CD4-positive, alpha-beta memory T cell (primary cell): ENCODE measurements at regions of chr19 and their contacts with region 1.

Region 1: GRCh38 chr19:16382775-16383543 is 58.3 kb downstream of the KLF2 start:
- DNase-seq: peak; percentile 72 to 80 (median 77)
- H3K4me3 ChIP-seq: peak overlapping the region in 1 of 2 donors; percentile 50
- H3K4me3 Mint-ChIP-seq: peak overlapping the region; percentile 63 to 85 (median 77)
- H3K27ac ChIP-seq: peak overlapping the region; percentile 66
- H3K27ac Mint-ChIP-seq: peak overlapping the region; percentile 93 to 97 (median 96)
- H3K4me1 ChIP-seq: peaks cover 69% of the 10 kb centered on the region
- H3K4me1 Mint-ChIP-seq: peaks cover 35 to 76% (median 60%) of the 10 kb centered on the region in 4 donors
- H3K27me3 ChIP-seq: no peaks in the 10 kb centered on the region
- H3K27me3 Mint-ChIP-seq: no peaks in the 10 kb centered on the region

Region 2: GRCh38 chr19:16247353-16248182 is 135.4 kb before region 1 on chr19:
- CTCF ChIA-PET with region 1: interaction called, 257 read pairs
- POLR2A ChIA-PET with region 1: interaction called, 62 read pairs
- intact Hi-C with region 1: loop called (anchors 1 kb)
- DNase-seq: peak; percentile 71 to 80 (median 73)
- H3K4me3 ChIP-seq: no peak overlapping the region
- H3K4me3 Mint-ChIP-seq: peak overlapping the region in 6 of 8 donors; percentile 23 to 66 (median 54)
- H3K27ac ChIP-seq: no peak overlapping the region
- H3K27ac Mint-ChIP-seq: peak overlapping the region; percentile 61 to 84 (median 67)
- H3K4me1 ChIP-seq: peaks cover 17% of the 10 kb centered on the region
- H3K4me1 Mint-ChIP-seq: peaks cover 11 to 26% (median 21%) of the 10 kb centered on the region in 4 donors
- H3K27me3 ChIP-seq: no peaks in the 10 kb centered on the region
- H3K27me3 Mint-ChIP-seq: peaks cover 0 to 3% of the 10 kb centered on the region in 2 donors

Region 3: GRCh38 chr19:16266586-16266942 is 116.4 kb before region 1 on chr19:
- CTCF ChIA-PET with region 1: interaction called, 36 read pairs
- POLR2A ChIA-PET with region 1: interaction called, 10 read pairs
- intact Hi-C with region 1: no loop called
- DNase-seq: peak; percentile 59 to 81 (median 70)
- H3K4me3 ChIP-seq: peak overlapping the region in 1 of 2 donors; percentile 14
- H3K4me3 Mint-ChIP-seq: peak overlapping the region in 7 of 8 donors; percentile 21 to 79 (median 67)
- H3K27ac ChIP-seq: peak overlapping the region; percentile 33
- H3K27ac Mint-ChIP-seq: peak overlapping the region; percentile 84 to 93 (median 89)
- H3K4me1 ChIP-seq: peaks cover 58% of the 10 kb centered on the region
- H3K4me1 Mint-ChIP-seq: peaks cover 39 to 68% (median 53%) of the 10 kb centered on the region in 4 donors
- H3K27me3 ChIP-seq: no peaks in the 10 kb centered on the region
- H3K27me3 Mint-ChIP-seq: no peaks in the 10 kb centered on the region

Region 4: GRCh38 chr19:16330368-16330801 is 52.6 kb before region 1 on chr19:
- CTCF ChIA-PET with region 1: interaction called, 133 read pairs
- POLR2A ChIA-PET with region 1: interaction called, 6,478 read pairs
- intact Hi-C with region 1: loop called (anchors 1 kb)
- DNase-seq: peak; percentile 93 to 99 (median 96)
- H3K4me3 ChIP-seq: peak overlapping the region in 1 of 2 donors; percentile 11
- H3K4me3 Mint-ChIP-seq: peak overlapping the region; percentile 97 to 100 (median 99)
- H3K27ac ChIP-seq: peak overlapping the region; percentile 83
- H3K27ac Mint-ChIP-seq: peak overlapping the region; percentile 92 to 99 (median 98)
- H3K4me1 ChIP-seq: peaks cover 38% of the 10 kb centered on the region
- H3K4me1 Mint-ChIP-seq: peaks cover 25 to 77% (median 37%) of the 10 kb centered on the region in 4 donors
- H3K27me3 ChIP-seq: no peaks in the 10 kb centered on the region
- H3K27me3 Mint-ChIP-seq: peaks cover 0 to 7% of the 10 kb centered on the region in 2 donors

Region 5: GRCh38 chr19:16371540-16371986 is 11.4 kb before region 1 on chr19:
- CTCF ChIA-PET with region 1: interaction called, 85 read pairs
- POLR2A ChIA-PET with region 1: interaction called, 1,006 read pairs
- intact Hi-C with region 1: loop called (anchors 1 kb)
- DNase-seq: peak; percentile 95 to 97 (median 95)
- H3K4me3 ChIP-seq: peak overlapping the region in 1 of 2 donors; percentile 47
- H3K4me3 Mint-ChIP-seq: no peak overlapping the region
- H3K27ac ChIP-seq: peak overlapping the region; percentile 89
- H3K27ac Mint-ChIP-seq: no peak overlapping the region
- H3K4me1 ChIP-seq: peaks cover 98% of the 10 kb centered on the region
- H3K4me1 Mint-ChIP-seq: peaks cover 0 to 60% (median 31%) of the 10 kb centered on the region in 4 donors
- H3K27me3 ChIP-seq: no peaks in the 10 kb centered on the region
- H3K27me3 Mint-ChIP-seq: no peaks in the 10 kb centered on the region

Region 6: GRCh38 chr19:16425019-16425418 is 42.1 kb after region 1 on chr19:
- CTCF ChIA-PET with region 1: no interaction called
- POLR2A ChIA-PET with region 1: no interaction called
- intact Hi-C with region 1: no loop called
- DNase-seq: no peak
- H3K4me3 ChIP-seq: no peak overlapping the region
- H3K4me3 Mint-ChIP-seq: no peak overlapping the region
- H3K27ac ChIP-seq: no peak overlapping the region
- H3K27ac Mint-ChIP-seq: peak overlapping the region in 2 of 7 donors; percentile 18 to 40
- H3K4me1 ChIP-seq: peaks cover 10% of the 10 kb centered on the region
- H3K4me1 Mint-ChIP-seq: peaks cover 2 to 43% (median 10%) of the 10 kb centered on the region in 4 donors
- H3K27me3 ChIP-seq: no peaks in the 10 kb centered on the region
- H3K27me3 Mint-ChIP-seq: no peaks in the 10 kb centered on the region

Region 7: DNA sequence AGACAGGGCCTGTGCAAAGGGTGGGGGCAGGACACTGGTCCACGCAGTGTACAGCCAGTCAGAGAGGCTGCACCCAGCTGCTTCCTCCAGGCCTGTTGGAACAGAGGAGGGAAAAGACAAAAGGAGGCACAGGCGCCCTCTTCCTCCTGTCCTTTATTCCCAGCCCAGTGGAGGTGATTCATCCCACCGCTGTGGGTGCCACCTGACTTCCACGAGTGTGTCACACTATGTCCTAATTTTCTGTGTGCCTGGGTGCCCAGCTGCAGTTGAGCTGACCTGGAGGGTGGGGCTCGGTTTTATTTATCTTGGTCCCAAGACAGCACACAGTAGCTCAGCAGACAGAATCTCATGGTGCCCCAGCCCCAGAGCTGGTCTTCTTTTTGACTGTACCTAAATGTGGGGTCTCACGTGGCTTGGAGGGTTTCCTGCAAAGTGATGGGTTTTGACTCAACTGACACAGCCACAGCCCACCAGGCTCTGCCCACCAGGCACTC is 79.8 kb after region 1 on chr19:
- CTCF ChIA-PET with region 1: no interaction called
- POLR2A ChIA-PET with region 1: no interaction called
- intact Hi-C with region 1: no loop called
- DNase-seq: no peak
- H3K4me3 ChIP-seq: no peak overlapping the region
- H3K4me3 Mint-ChIP-seq: peak overlapping the region in 1 of 8 donors; percentile 11
- H3K27ac ChIP-seq: no peak overlapping the region
- H3K27ac Mint-ChIP-seq: peak overlapping the region in 2 of 7 donors; percentile 22 to 77
- H3K4me1 ChIP-seq: peaks cover 31% of the 10 kb centered on the region
- H3K4me1 Mint-ChIP-seq: peaks cover 35 to 68% (median 49%) of the 10 kb centered on the region in 4 donors
- H3K27me3 ChIP-seq: no peaks in the 10 kb centered on the region
- H3K27me3 Mint-ChIP-seq: no peaks in the 10 kb centered on the region

Region 8: GRCh38 chr19:16548956-16549355 is 166.0 kb after region 1 on chr19:
- CTCF ChIA-PET with region 1: no interaction called
- POLR2A ChIA-PET with region 1: no interaction called
- intact Hi-C with region 1: no loop called
- DNase-seq: no peak
- H3K4me3 ChIP-seq: no peak overlapping the region
- H3K4me3 Mint-ChIP-seq: no peak overlapping the region
- H3K27ac ChIP-seq: no peak overlapping the region
- H3K27ac Mint-ChIP-seq: peak overlapping the region in 1 of 7 donors; percentile 8
- H3K4me1 ChIP-seq: peaks cover 13% of the 10 kb centered on the region
- H3K4me1 Mint-ChIP-seq: peaks cover 11 to 28% (median 15%) of the 10 kb centered on the region in 4 donors
- H3K27me3 ChIP-seq: no peaks in the 10 kb centered on the region
- H3K27me3 Mint-ChIP-seq: no peaks in the 10 kb centered on the region